ENCODE measurements at regions of chr14 and their contacts with region 1.

Region 1: DNA sequence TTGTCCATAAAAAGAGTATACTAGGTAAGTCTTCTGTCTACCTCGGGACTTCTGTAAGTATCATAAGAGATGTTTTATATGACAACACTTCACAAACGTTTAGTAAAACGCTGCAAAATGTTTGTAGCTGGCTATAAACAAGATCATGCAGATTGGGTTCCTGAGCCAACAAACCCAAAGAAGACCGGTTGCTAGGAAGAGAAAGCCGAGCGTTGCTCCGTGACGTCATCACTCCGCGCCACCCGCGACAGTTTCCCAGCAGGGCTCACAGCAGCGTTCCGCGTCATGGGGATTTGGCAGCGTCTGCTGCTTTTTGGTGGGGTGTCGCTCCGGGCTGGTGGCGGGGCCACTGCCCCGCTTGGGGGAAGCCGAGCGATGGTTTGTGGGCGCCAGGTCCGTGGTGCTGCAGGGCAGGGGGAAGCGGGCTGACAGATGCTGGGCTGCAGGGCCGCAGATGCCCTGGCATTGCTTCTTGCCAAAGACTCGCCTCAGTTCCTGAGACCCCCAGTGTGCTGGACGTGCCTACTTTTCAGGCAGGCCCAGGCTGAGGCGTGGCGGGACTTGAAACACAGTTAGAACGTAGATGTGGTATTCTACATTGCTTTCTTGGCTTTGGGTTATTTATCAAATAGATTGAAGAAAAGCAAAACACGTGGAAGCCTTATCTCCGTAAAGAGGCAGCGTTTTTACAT is at the start of gene NUBPL:
- DNase-seq: peak; percentile 95
- H3K4me3 Mint-ChIP-seq: peak within 1 kb of the TSS; percentile 94
- H3K27ac Mint-ChIP-seq: peak within 1 kb of the TSS; percentile 98
- H3K4me1 Mint-ChIP-seq: peaks cover 23% of the 10 kb centered on the region
- H3K27me3 Mint-ChIP-seq: peaks cover 16% of the 10 kb centered on the region
- total RNA-seq, gene NUBPL: 12.0 and 13.7 TPM in 2 replicates

Region 2: DNA sequence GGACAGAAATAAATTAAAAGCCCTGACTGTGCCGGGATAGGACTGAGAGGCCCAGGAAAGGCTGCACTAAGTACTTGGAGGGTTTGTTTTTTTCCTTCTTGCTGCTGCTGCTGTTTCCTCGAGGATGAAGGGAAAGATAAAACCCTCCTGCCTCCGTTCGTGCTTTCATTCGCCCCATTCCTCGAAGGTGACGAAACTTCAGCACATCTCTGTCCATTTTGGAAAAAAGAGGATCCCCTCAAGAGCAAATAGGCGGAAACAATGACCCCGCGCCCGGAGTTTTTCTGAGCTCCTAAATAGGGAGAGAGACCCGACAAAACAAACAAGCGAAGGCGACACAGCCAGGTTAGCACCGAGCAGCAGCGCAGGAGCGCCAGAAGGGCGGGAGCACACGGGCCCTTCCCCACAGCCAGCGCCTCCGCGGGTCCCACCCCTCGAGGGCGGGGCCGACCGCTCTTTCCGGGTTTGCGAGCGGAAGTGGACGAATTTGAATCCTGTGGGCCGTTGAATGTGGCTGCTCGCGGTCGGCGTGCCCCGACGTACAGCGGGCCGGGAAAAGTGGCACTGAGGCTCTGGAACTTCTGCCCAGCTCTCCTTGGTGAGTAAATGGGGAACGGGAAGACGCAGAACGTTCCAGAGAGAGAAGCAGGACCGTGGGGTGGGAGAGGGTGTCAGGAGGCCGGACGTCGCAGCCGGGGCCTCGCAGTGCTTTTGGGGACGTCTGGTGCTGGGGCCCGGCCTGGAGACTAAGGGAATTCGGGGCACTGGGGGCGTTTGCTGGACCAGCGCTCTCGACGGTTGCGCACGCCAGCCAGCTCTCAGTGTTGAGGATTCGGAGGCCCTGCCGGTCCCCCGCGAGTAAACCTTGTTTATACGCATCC is 1002.4 kb before region 1 on chr14 and contains the start of gene G2E3:
- intact Hi-C with region 1: loop called (anchors 1 kb)
- DNase-seq: peak; percentile 90
- H3K4me3 Mint-ChIP-seq: peak within 1 kb of the TSS; percentile 100
- H3K27ac Mint-ChIP-seq: peak within 1 kb of the TSS; percentile 99
- H3K4me1 Mint-ChIP-seq: peaks cover 33% of the 10 kb centered on the region
- H3K27me3 Mint-ChIP-seq: peaks cover 4% of the 10 kb centered on the region
- total RNA-seq, gene G2E3: 21.5 and 24.1 TPM in 2 replicates

Region 3: DNA sequence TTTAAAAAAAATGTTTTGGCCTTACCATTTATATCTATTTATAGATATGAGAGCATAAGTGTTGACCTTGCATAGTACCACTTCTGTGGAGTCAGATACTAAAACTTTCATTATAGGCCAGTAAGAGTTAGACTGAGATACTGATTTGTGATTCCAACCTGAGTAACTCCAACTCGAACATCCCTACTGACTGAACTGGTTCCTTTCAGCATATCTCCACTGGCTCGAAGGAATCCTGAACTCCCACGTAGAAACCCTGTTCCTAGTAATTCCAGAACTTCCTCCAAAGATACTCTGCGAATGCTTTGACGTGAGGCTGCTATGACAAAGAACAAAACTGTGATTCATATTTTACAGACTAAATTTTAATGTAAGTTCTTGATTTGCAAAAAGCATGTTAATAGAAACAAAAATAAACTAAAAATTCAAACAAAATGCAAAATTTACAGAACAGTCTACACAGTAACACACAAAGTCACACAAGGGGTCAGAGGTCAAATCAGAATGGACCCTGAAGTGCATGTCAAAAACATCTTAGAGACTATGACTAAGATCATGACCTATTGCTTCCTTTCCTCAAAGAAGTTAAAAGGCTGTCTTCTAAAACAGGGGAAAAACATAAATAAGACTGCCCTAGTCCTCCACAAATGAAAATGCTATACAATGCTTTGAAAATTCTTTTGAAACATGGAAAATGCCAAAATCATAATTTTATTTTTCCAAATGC is 172.5 kb before region 1 on chr14:
- intact Hi-C with region 1: loop called (anchors 5 kb)
- DNase-seq: no peak
- H3K4me3 Mint-ChIP-seq: peak overlapping the region; percentile 7
- H3K27ac Mint-ChIP-seq: peak overlapping the region; percentile 93
- H3K4me1 Mint-ChIP-seq: peaks cover 41% of the 10 kb centered on the region
- H3K27me3 Mint-ChIP-seq: no peaks in the 10 kb centered on the region

Region 4: DNA sequence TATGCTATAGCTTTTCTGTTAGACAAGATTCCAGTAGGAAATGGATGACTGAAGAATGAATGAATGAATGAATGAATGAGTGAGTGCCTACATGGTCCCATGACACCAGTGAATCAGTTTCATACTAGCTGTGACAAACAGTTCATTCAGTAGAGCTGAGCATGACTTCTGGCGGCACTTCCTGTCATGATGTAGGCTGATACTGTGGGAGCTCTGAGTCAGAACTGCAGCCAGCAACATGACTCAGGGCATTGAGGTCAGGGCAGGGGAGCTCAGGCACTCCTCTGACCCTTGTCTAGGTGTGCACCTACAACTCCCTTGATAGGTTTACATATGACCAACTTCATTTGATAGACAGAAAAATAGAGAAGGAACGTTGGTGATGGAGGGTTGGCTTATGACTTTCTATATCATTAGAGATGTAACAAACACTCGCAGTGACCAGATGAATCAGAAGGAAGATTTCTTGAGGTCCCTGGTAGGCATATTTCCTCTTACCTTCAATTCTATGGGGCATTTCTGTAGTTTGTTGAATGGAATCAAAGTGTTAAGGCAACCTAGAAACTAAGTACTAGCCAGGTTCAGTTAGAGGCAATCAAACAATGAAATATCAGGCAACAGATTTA is 376.5 kb after region 1 on chr14:
- intact Hi-C with region 1: loop called (anchors 5 kb)
- DNase-seq: peak; percentile 64
- H3K4me3 Mint-ChIP-seq: no peak overlapping the region
- H3K27ac Mint-ChIP-seq: peak overlapping the region; percentile 7
- H3K4me1 Mint-ChIP-seq: peaks cover 10% of the 10 kb centered on the region
- H3K27me3 Mint-ChIP-seq: peaks cover 3% of the 10 kb centered on the region

Region 5: GRCh38 chr14:32259368-32260013 is 698.2 kb after region 1 on chr14:
- intact Hi-C with region 1: loop called (anchors 2 kb)
- DNase-seq: peak; percentile 8
- H3K4me3 Mint-ChIP-seq: peak overlapping the region; percentile 16
- H3K27ac Mint-ChIP-seq: peak overlapping the region; percentile 46
- H3K4me1 Mint-ChIP-seq: peaks cover 30% of the 10 kb centered on the region
- H3K27me3 Mint-ChIP-seq: no peaks in the 10 kb centered on the region